Posterior vena cava (tissue), 2 donors: ENCODE measurements at regions of chr5 and their contacts with region 1.

Region 1: GRCh38 chr5:136560126-136560525 is 194.8 kb upstream of the TRPC7 start:
- DNase-seq: no peak

Region 2: DNA sequence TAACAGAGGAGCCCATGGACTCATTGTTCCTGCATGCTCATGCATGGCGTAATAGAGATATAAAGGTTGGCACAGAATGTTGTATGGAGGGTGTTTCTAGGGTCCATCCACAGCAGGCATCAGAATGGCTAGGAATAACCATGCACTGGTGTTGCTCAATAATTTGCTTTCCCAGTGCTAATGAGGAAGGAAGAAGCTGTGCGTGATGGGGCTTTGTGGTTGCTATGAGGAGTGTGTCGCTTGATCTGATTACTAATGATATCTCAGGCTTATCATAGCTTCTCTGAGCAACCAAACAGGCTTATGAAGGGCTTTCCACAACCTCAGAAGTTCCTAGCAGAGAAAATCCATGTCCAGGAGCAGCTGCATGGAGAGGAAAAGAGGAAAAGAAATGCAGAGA is 43.5 kb before region 1 on chr5:
- intact Hi-C with region 1: loop called in 1 of 2 experiments (anchors 1 kb)
- DNase-seq: no peak